H1 (cell line): ENCODE measurements at regions of chr17 and their contacts with region 1.

Region 1: GRCh38 chr17:3738562-3739295 is 15.0 kb downstream of the HASPIN start:
- DNase-seq: no peak
- H3K4me3 ChIP-seq: no peak overlapping the region
- H3K27ac ChIP-seq: no peak overlapping the region
- H3K4me1 ChIP-seq: peaks cover 2 to 5% (median 3%) of the 10 kb centered on the region in 4 experiments; a peak in 5 of 7 replicates
- H3K27me3 ChIP-seq: no peaks in the 10 kb centered on the region
- CTCF ChIP-seq: no peak
- EP300 ChIP-seq: no peak
- POLR2A ChIP-seq: no peak
- RAD21 ChIP-seq: no peak

Region 2: DNA sequence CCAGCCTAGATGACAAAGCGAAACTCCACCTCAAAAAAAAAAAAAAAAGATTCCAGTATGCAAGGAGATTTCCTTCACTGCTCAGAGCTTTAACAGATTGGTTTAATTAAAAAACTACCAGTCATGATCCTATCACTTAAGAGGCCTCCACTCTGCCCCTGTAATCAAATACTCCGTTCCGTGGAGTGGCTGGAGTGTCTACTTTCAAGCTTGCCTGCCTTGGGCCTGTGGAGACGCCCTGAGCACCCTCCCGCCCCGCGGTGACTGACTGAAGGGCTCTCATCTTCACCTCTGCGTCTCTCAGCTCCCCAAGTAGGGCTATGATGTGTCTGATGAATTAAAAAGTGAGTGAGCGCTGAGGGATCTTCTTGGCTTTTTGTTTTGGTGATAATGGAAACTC is 155.8 kb before region 1 on chr17:
- CTCF ChIA-PET with region 1: no interaction called
- POLR2A ChIA-PET with region 1: no interaction called
- DNase-seq: no peak
- H3K4me3 ChIP-seq: no peak overlapping the region
- H3K27ac ChIP-seq: no peak overlapping the region
- H3K4me1 ChIP-seq: no peaks in the 10 kb centered on the region
- H3K27me3 ChIP-seq: no peaks in the 10 kb centered on the region
- CTCF ChIP-seq: no peak
- EP300 ChIP-seq: no peak
- POLR2A ChIP-seq: no peak
- RAD21 ChIP-seq: no peak

Region 3: DNA sequence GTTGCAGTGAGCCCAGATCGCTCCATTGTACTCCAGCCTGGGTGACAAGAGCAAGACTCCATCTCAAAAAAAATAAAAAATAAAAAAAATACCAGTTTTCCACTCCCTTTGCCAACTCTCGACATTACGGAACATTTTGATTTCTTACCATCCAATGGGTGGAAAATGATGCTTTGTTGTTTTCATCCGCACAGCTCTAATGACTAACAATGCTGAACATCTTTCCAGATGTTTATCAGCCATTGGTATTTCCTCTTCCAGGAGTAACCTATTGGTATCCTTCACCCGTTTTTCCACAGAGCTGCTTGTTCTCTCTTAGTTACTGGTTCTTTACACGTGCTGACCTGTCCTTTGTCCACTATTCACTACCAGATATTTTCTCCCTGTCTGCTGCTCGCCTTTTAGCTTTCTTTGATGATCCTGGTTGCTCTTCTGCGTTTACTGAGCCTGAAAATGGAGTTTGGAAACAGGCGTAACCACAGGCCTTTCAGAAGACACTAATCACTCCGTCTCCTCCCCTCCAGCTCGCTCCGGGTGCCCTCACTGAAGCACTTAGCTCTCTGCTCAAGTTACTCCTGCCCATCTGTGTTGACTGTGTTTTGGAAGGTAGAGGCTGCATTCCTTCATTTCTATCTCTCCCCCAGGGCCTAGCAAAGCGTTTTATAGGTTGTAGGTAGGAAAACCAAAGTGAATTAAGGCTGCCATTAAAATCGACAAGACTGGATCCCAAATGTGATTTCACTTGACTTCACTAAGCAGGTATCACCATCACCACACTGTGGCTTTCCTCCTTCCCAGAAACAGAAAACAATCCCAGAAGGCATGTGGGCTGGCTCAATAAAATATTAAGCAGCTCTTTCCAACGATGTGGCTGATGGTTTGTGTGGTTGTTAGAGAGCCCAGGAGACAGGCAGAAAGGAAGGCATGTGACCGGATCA is 111.6 kb before region 1 on chr17:
- CTCF ChIA-PET with region 1: no interaction called
- POLR2A ChIA-PET with region 1: no interaction called
- DNase-seq: no peak
- H3K4me3 ChIP-seq: no peak overlapping the region
- H3K27ac ChIP-seq: no peak overlapping the region
- H3K4me1 ChIP-seq: no peaks in the 10 kb centered on the region
- H3K27me3 ChIP-seq: no peaks in the 10 kb centered on the region
- CTCF ChIP-seq: no peak
- EP300 ChIP-seq: no peak
- POLR2A ChIP-seq: no peak
- RAD21 ChIP-seq: no peak

Region 4: DNA sequence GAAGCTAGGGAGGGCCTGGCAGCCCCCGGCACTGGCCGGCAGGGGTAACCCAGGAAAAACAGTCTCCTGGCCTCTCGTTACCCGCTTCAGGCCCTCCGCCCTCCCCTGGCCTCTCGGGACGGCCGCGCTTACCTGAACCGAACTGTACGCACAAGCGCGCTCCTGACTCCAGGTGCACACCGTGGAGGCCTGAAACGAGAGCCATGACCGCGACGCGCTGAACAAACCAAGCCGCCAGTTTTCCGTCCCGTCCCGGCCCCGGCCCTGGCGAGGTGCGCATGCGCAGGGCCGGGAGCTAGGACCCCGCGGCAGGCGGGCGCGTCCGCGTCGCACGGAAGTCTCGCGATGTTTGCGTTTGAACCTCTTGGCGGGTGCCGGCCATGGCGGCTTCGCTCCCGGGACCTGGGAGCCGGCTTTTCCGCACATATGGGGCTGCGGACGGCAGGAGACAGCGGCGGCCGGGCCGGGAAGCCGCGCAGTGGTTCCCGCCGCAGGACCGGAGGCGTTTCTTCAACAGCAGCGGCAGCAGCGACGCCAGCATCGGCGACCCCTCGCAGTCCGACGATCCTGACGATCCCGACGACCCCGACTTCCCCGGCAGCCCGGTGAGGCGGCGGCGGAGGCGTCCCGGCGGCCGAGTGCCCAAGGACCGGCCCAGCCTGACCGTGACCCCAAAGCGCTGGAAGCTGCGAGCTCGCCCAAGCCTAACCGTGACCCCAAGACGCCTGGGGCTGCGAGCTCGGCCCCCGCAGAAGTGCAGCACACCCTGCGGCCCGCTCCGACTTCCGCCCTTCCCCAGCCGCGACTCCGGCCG is 15.0 kb before region 1 on chr17 and contains the start of gene HASPIN:
- CTCF ChIA-PET with region 1: interaction called, 72 read pairs
- POLR2A ChIA-PET with region 1: interaction called, 15 read pairs
- DNase-seq: peak; percentile 70 to 95
- H3K4me3 ChIP-seq: peak within 1 kb of the TSS; percentile 67 to 84 (median 75)
- H3K27ac ChIP-seq: peak within 1 kb of the TSS; percentile 71
- H3K4me1 ChIP-seq: peaks cover 0 to 13% (median 8%) of the 10 kb centered on the region in 4 experiments; a peak in 4 of 7 replicates
- H3K27me3 ChIP-seq: no peaks in the 10 kb centered on the region
- CTCF ChIP-seq: peak in 2 of 3 experiments; percentile 4 to 17; a peak in 2 of 4 replicates
- EP300 ChIP-seq: no peak
- POLR2A ChIP-seq: peak; percentile 88 to 89
- RAD21 ChIP-seq: no peak
- total RNA-seq, gene HASPIN: 29.4 and 29.5 TPM in 2 replicates

Region 5: DNA sequence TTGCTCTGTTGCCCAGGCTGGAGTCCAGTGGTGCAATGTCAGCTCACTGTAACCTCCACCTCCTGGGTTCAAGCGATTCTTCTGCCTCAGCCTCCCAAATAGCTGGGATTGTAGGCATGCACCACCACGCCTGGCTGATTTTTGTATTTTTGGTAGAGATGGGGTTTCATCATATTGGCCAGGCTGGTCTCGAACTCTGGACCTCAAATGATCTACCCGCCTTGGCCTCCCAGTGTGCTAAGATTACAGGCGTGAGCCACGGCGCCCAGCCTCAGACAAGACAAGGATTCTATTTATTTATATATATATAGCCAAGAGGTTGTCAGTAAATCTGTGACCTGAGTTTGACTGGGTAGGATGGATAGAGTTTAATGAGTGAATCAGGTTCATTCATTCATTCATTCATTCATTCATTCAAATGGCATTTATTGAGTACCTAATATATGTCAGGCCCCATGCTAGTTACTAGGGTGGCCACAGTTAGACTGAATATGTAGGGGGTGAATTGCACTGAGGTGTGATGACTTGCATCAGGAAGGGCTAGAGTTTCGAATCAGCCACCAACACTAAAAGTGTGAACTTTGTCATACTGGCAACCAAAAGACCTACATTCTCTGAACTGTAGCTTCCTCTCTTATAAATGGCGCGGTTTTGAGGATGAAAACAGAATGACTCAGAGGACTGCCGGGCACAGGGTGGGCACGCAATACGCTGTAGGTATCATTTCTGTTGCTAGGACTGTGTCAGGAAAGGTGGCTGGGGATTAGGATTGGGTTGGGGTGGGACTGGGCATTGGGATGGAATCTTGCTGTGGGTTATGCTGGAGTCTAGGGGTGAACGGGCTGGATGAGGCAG is 24.4 kb after region 1 on chr17:
- CTCF ChIA-PET with region 1: interaction called, 14 read pairs
- POLR2A ChIA-PET with region 1: interaction called, 3 read pairs
- DNase-seq: no peak
- H3K4me3 ChIP-seq: no peak overlapping the region
- H3K27ac ChIP-seq: no peak overlapping the region
- H3K4me1 ChIP-seq: no peaks in the 10 kb centered on the region
- H3K27me3 ChIP-seq: no peaks in the 10 kb centered on the region
- CTCF ChIP-seq: no peak
- EP300 ChIP-seq: no peak
- POLR2A ChIP-seq: no peak
- RAD21 ChIP-seq: no peak

Region 6: DNA sequence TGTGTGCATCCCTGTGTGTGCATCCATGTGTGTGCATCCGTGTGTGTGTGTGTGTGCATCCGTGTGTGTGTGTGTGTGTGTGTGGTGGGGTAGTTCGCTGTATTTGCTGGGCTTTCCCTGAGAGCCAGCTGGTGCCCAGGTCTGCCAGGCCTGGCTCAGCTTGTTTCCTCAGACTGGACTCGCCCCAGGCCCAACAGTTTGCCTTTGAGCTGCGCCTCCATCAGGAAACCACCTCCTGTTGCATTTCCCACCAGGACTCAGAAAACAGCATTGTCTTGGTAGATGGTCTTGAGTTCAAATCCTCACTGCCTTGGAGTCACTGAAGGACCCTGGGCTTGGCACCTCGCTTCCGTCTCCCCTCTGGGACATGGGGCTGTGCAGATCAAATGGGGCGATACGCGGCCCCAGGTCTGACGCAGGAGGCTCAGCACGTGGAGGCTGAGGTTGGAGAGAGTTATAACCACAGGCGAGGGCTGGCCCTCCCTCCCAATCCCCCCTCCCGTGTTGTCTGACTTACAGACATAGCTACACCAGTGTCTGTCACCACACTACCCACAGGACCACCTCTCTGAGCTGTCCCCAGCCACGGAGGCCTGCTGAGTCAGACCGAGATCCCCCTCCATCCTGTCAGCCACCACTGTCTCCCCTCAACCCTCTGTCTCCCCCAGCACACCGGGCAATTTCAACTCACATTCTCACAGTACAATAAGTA is 57.5 kb after region 1 on chr17:
- CTCF ChIA-PET with region 1: interaction called, 32 read pairs
- POLR2A ChIA-PET with region 1: interaction called, 8 read pairs
- DNase-seq: no peak
- H3K4me3 ChIP-seq: no peak overlapping the region
- H3K27ac ChIP-seq: no peak overlapping the region
- H3K4me1 ChIP-seq: no peaks in the 10 kb centered on the region; a peak in 1 of 7 replicates
- H3K27me3 ChIP-seq: no peaks in the 10 kb centered on the region
- CTCF ChIP-seq: no peak
- EP300 ChIP-seq: no peak
- POLR2A ChIP-seq: no peak
- RAD21 ChIP-seq: no peak

Region 7: DNA sequence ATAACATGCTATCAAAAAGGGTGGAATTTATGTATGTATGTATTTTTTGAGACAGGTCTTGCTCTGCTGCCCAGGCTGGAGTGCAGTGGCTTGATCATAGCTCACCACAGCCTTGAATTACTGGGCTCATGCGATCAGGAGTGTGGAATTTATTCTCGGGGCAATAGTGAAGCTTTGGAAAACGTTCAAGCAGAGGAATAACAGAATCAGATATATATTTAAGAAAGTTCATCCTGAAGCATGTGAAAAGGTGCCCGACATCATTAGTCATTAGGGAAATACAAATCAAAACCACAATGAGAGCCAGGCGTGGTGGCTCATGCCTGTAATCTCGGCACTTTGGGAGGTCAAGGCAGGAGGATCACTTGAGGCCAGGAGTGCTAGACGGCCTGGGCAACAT is 70.0 kb after region 1 on chr17:
- CTCF ChIA-PET with region 1: interaction called, 20 read pairs
- POLR2A ChIA-PET with region 1: interaction called, 9 read pairs
- DNase-seq: no peak
- H3K4me3 ChIP-seq: no peak overlapping the region
- H3K27ac ChIP-seq: no peak overlapping the region
- H3K4me1 ChIP-seq: no peaks in the 10 kb centered on the region
- H3K27me3 ChIP-seq: no peaks in the 10 kb centered on the region
- CTCF ChIP-seq: no peak
- EP300 ChIP-seq: no peak
- POLR2A ChIP-seq: no peak
- RAD21 ChIP-seq: no peak

Region 8: GRCh38 chr17:3827124-3827773 is 88.5 kb after region 1 on chr17:
- CTCF ChIA-PET with region 1: interaction called, 81 read pairs
- POLR2A ChIA-PET with region 1: interaction called, 3 read pairs
- DNase-seq: peak in 1 of 2 experiments; percentile 80
- H3K4me3 ChIP-seq: no peak overlapping the region
- H3K27ac ChIP-seq: no peak overlapping the region
- H3K4me1 ChIP-seq: no peaks in the 10 kb centered on the region
- H3K27me3 ChIP-seq: no peaks in the 10 kb centered on the region
- CTCF ChIP-seq: peak; percentile 37 to 87 (median 67)
- EP300 ChIP-seq: no peak
- POLR2A ChIP-seq: no peak
- RAD21 ChIP-seq: peak; percentile 70 to 76; a peak in 3 of 4 replicates

Region 9: GRCh38 chr17:3845621-3846441 is 107.1 kb after region 1 on chr17 and contains the start of gene NCBP3:
- CTCF ChIA-PET with region 1: interaction called, 24 read pairs
- POLR2A ChIA-PET with region 1: interaction called, 3 read pairs
- DNase-seq: peak; percentile 77 to 91
- H3K4me3 ChIP-seq: peak within 1 kb of the TSS; percentile 84 to 95 (median 90)
- H3K27ac ChIP-seq: peak within 1 kb of the TSS; percentile 91
- H3K4me1 ChIP-seq: 0 out of 7 replicates have a peak, but pooled peaks cover 0 to 3% (median 0%) of the 10 kb centered on the region in 4 experiments
- H3K27me3 ChIP-seq: no peaks in the 10 kb centered on the region
- CTCF ChIP-seq: peak; percentile 80 to 89 (median 86)
- EP300 ChIP-seq: peak in 1 of 2 experiments; percentile 88; a peak in 1 of 3 replicates
- POLR2A ChIP-seq: peak; percentile 86 to 94
- RAD21 ChIP-seq: peak in 1 of 2 experiments; percentile 24; a peak in 1 of 4 replicates
- total RNA-seq, gene NCBP3: 46.1 and 47.9 TPM in 2 replicates

Region 10: DNA sequence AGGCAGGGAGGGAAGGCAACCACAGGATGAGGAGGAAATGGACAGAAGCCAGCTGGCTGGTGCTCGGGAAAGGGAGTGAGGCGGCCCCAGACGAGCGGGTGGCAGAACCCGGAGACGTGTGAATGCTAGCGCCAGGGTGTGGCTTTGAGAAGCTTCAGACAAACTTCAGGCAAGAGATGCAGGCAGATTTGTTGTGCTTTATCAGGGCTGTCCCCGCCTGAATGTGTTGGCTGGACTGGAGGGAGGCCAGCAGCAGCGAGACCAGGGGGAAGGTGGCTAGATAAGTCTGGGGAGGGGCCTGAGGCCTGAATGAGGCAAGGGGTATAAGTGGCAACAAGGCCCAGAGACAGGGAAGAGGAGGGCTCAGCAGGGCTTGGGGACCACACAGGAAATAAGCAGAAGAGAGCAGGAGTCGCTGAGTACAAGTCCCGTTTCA is 132.2 kb after region 1 on chr17:
- CTCF ChIA-PET with region 1: no interaction called
- POLR2A ChIA-PET with region 1: no interaction called
- DNase-seq: no peak
- H3K4me3 ChIP-seq: no peak overlapping the region
- H3K27ac ChIP-seq: no peak overlapping the region
- H3K4me1 ChIP-seq: no peaks in the 10 kb centered on the region
- H3K27me3 ChIP-seq: no peaks in the 10 kb centered on the region
- CTCF ChIP-seq: no peak
- EP300 ChIP-seq: no peak
- POLR2A ChIP-seq: no peak
- RAD21 ChIP-seq: no peak